ENCODE measurements at regions of chr14 and their contacts with region 1.

Region 1: DNA sequence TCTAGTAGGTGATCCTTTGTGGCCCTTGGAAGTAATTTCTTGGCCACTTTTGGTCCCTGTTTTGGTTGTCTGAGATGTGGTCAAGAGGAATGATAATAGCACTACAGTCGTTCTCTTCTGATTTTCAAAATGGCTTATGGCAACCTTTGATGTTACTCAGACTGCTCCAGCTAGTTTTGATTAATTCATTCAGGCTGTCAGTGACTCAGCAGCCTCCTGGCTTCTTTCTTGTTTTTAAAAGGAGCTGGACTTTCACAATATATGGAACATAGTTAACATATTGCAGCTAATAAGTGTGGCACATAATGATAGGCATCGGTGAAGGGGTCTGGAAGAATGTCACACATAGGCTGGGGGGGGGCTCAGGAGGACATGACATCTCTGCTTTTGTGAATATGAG is 47.4 kb downstream of the WDR20 start:
- DNase-seq: peak; percentile 56 to 98
- H3K4me3 ChIP-seq: peak overlapping the region; percentile 31; the same call in 1 of the 2 replicates
- H3K27ac ChIP-seq: peak overlapping the region; percentile 90
- H3K4me1 ChIP-seq: peaks cover 61% of the 10 kb centered on the region
- H3K27me3 ChIP-seq: no peaks in the 10 kb centered on the region
- CTCF ChIP-seq: no peak

Region 2: GRCh38 chr14:101947906-101948665 is 239.0 kb before region 1 on chr14:
- CTCF ChIA-PET with region 1: no interaction called
- POLR2A ChIA-PET with region 1: interaction called, 25 read pairs
- intact Hi-C with region 1: no loop called
- DNase-seq: peak; percentile 100
- H3K4me3 ChIP-seq: peak overlapping the region; percentile 83
- H3K27ac ChIP-seq: peak overlapping the region; percentile 93
- H3K4me1 ChIP-seq: peaks cover 20% of the 10 kb centered on the region
- H3K27me3 ChIP-seq: no peaks in the 10 kb centered on the region
- CTCF ChIP-seq: no peak

Region 3: DNA sequence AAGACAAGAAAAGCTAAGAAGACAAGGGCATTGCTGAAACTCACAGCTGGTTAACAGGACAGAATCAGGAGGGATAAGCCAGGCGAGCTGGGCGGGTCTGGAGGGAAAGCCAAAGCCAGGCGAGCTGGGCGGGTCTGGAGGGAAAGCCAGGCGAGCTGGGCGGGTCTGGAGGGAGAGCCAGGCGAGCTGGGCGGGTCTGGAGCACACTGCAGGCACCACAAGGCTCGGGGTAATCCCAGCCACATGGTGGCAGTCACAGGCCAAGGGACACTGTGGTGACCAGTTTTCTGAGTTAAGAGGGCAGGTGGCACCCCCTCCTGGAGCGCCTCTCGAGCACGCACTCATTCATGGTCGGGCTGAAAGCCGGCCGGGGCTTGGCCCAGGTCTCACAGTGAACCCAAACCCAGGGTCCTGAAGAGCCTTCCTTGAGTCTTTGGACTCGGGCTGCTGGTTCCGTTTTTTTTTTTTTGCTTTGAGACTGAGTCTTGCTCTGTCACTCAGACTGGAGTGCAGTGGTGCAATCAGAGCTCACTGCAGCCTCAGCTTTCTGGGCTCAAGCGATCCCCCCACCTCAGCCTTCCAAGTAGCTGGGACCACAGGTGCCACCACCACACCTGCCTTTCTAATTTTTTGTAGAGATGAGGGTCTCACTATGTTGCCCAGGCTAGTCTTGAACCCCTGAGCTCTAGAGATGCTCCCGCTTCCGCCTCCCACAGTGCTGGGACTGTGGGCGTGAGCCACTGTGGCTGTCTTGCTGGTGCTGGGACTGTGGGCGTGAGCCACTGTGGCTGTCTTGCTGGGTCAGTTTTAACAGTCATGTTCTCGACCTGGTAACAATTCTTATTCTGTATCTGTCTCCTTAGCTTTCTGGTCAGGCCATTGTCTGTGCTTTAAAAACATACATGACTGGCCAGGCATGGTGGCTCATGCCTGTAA is 140.4 kb before region 1 on chr14:
- CTCF ChIA-PET with region 1: interaction called, 12 read pairs
- POLR2A ChIA-PET with region 1: interaction called, 7 read pairs
- intact Hi-C with region 1: no loop called
- DNase-seq: peak; percentile 98 to 100
- H3K4me3 ChIP-seq: no peak overlapping the region
- H3K27ac ChIP-seq: no peak overlapping the region
- H3K4me1 ChIP-seq: peaks cover 3% of the 10 kb centered on the region
- H3K27me3 ChIP-seq: no peaks in the 10 kb centered on the region
- CTCF ChIP-seq: peak; percentile 84

Region 4: GRCh38 chr14:102071283-102071998 is 115.6 kb before region 1 on chr14:
- CTCF ChIA-PET with region 1: no interaction called
- POLR2A ChIA-PET with region 1: interaction called, 15 read pairs
- intact Hi-C with region 1: no loop called
- DNase-seq: peak; percentile 66 to 100
- H3K4me3 ChIP-seq: peak overlapping the region; percentile 7; the same call in 1 of the 2 replicates
- H3K27ac ChIP-seq: peak overlapping the region; percentile 91
- H3K4me1 ChIP-seq: peaks cover 34% of the 10 kb centered on the region
- H3K27me3 ChIP-seq: no peaks in the 10 kb centered on the region
- CTCF ChIP-seq: 0 out of 2 replicates have a peak, but pooled peaks have one; percentile 28

Region 5: DNA sequence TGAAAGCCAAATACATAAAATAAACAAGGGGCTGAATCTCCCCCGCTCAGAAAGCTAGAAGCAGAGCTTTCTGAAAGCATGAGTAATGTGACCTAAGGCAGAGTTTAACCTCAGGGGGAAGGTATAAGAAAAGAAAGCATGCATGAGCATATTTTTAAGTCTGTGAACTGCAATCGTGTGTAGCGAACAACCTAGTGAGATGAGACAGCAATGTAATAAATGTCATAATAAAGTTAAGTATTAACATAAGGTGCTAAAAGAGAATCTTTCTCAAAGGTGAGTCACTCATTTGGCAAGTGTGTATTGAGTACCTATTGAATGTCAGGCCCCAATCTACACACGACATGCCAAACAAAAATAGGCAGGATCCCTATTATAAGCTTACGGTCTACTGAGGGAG is 61.5 kb before region 1 on chr14:
- CTCF ChIA-PET with region 1: interaction called, 10 read pairs
- POLR2A ChIA-PET with region 1: interaction called, 7 read pairs
- intact Hi-C with region 1: no loop called
- DNase-seq: peak; percentile 25 to 97
- H3K4me3 ChIP-seq: peak overlapping the region; percentile 14
- H3K27ac ChIP-seq: peak overlapping the region; percentile 72
- H3K4me1 ChIP-seq: peaks cover 36% of the 10 kb centered on the region
- H3K27me3 ChIP-seq: no peaks in the 10 kb centered on the region
- CTCF ChIP-seq: no peak

Region 6: DNA sequence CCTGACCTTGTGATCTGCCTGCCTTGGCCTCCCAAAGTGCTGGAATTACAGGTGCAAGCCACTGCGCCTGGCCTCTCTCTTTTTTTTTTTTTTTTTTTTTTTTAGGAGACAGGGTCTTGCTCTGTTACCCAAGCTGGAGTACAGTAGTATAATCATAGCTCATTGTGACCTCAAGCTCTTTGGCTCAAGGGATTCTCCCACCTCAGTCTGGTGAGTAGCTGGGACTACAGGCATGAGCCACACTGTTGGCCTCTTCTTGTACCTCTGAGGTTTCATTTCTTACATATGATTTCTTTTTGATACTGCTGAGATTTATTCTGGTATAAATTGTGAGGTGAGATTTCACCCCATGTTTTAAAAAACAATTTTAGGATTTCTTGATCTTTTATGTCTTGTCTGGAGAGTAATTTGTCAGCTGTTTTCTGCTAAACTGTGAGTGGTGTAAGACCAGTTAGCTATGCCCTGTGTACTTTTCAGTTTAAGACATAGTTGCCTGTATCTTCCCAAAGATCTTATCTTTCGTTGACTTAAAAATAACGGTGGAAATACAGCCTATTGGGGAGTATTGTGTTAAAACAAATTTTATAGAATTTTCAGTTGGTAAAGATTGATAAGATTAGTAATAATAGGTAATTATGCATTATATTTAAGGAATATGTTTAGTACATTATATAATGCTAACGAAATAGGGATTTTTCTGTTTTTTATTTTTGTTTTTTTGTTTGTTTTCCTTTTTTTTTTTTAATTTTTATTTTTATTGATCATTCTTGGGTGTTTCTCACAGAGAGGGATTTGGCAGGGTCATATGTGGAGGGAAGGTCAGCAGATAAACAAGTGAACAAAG is 15.7 kb before region 1 on chr14:
- CTCF ChIA-PET with region 1: interaction called, 14 read pairs
- POLR2A ChIA-PET with region 1: interaction called, 3 read pairs
- intact Hi-C with region 1: no loop called
- DNase-seq: no peak
- H3K4me3 ChIP-seq: no peak overlapping the region
- H3K27ac ChIP-seq: peak overlapping the region; percentile 40
- H3K4me1 ChIP-seq: 0 out of 2 replicates have a peak, but pooled peaks cover 4% of the 10 kb centered on the region
- H3K27me3 ChIP-seq: no peaks in the 10 kb centered on the region
- CTCF ChIP-seq: no peak

Region 7: DNA sequence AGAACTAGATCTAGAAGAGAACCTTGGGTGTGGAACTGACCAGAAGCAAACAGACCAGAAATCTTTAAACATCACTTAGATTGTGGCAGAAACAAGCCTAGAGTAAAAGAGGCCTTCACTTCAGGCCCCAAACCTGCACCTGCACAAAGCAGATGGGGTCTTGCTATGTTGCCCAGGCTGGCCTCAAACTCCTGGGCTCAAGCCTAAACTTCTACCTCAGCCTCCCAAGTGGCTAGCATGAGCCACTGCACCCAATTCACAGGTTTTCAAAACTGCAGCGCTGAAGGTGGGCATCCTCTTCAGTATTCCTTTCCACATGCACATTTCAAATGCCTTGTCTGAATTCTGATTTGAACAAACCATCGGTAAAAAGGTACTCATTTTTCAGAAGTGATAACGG is 98.1 kb after region 1 on chr14:
- CTCF ChIA-PET with region 1: no interaction called
- POLR2A ChIA-PET with region 1: no interaction called
- intact Hi-C with region 1: no loop called
- DNase-seq: no peak
- H3K4me3 ChIP-seq: no peak overlapping the region
- H3K27ac ChIP-seq: no peak overlapping the region
- H3K4me1 ChIP-seq: peaks cover 45% of the 10 kb centered on the region
- H3K27me3 ChIP-seq: no peaks in the 10 kb centered on the region
- CTCF ChIP-seq: no peak

Region 8: GRCh38 chr14:103141119-103141796 is 954.2 kb after region 1 on chr14:
- CTCF ChIA-PET with region 1: no interaction called
- POLR2A ChIA-PET with region 1: interaction called, 14 read pairs
- intact Hi-C with region 1: no loop called
- DNase-seq: peak; percentile 78 to 84
- H3K4me3 ChIP-seq: no peak overlapping the region
- H3K27ac ChIP-seq: 0 out of 2 replicates have a peak overlapping the region, but pooled peaks have one; percentile 30
- H3K4me1 ChIP-seq: peaks cover 59% of the 10 kb centered on the region
- H3K27me3 ChIP-seq: no peaks in the 10 kb centered on the region
- CTCF ChIP-seq: peak; percentile 99